ENCODE measurements at regions of chr2 and their contacts with region 1.

Region 1: DNA sequence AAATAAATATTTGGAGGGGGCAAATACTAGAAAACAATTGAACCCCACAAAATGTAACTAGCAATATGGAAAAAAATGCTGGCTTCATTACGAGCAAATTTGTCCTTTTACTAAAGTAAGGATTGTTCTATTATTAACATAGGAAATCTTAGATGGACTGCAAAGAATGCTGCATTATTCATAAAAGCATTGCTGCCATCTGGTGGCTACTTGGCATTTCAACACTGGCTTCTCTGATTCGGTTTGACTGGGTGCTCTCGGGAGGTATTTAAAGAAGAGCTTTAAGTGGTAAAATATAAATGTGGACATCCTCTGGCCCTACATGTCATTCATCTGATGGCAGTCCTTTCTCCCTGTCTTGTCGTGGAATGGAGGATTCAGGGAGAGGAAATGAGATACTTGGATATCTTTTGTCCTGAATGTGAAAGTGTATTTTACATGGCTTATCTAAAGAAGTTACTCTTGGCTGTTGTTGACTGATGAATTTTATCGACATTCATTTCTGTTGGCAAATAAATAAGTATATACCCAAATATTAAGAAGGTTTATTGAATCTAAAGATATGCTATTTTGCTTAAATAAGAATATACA is 130.2 kb downstream of the ARHGAP15 start:
- DNase-seq: peak; percentile 54
- H3K4me3 Mint-ChIP-seq: peak overlapping the region; percentile 63
- H3K27ac Mint-ChIP-seq: peak overlapping the region; percentile 92
- H3K4me1 Mint-ChIP-seq: peaks cover 73% of the 10 kb centered on the region
- H3K27me3 Mint-ChIP-seq: no peaks in the 10 kb centered on the region

Region 2: GRCh38 chr2:143110758-143111428 is 148.6 kb before region 1 on chr2:
- intact Hi-C with region 1: loop called (anchors 1 kb)
- DNase-seq: peak; percentile 46
- H3K4me3 Mint-ChIP-seq: no peak overlapping the region
- H3K27ac Mint-ChIP-seq: peak overlapping the region; percentile 64
- H3K4me1 Mint-ChIP-seq: peaks cover 39% of the 10 kb centered on the region
- H3K27me3 Mint-ChIP-seq: peaks cover 8% of the 10 kb centered on the region

Region 3: DNA sequence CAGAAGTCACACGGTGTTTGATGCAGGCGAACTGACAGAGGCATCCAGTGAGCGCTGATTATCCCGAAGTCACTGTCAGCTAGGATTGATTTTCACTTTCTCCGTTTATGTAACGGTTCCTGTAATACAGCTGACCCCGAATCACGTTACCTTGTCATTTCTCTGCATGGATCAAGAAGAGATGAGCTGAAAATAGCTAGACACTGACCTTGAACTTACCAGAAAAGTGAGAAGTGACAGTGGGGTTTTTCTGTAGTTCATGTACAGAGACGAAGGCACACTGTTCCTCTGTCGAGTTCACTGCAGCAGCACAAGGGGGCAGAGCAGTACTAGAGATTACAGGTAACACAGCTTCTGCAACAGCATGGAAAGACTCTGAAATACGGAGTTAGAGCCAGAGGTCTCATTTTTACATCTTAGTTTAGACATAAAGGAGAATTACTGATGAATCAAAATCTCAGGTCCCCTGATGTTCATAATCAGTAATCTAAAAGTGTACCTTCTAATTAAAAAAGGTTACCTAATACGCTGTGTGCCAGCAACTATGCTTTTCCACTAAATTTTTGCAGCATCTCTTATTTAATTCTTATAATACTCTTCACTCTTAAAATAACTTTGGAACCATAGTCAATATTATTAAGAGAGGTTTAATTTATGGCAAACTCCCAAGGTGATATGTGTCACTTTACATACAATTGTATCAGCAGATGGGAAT is 97.2 kb before region 1 on chr2:
- intact Hi-C with region 1: loop called (anchors 1 kb)
- DNase-seq: peak; percentile 12
- H3K4me3 Mint-ChIP-seq: no peak overlapping the region
- H3K27ac Mint-ChIP-seq: peak overlapping the region; percentile 19
- H3K4me1 Mint-ChIP-seq: peaks cover 54% of the 10 kb centered on the region
- H3K27me3 Mint-ChIP-seq: no peaks in the 10 kb centered on the region

Region 4: GRCh38 chr2:143205106-143205764 is 54.2 kb before region 1 on chr2:
- intact Hi-C with region 1: loop called (anchors 1 kb)
- DNase-seq: no peak
- H3K4me3 Mint-ChIP-seq: no peak overlapping the region
- H3K27ac Mint-ChIP-seq: peak overlapping the region; percentile 47
- H3K4me1 Mint-ChIP-seq: peaks cover 35% of the 10 kb centered on the region
- H3K27me3 Mint-ChIP-seq: no peaks in the 10 kb centered on the region

Region 5: GRCh38 chr2:143223556-143223955 is 35.9 kb before region 1 on chr2:
- intact Hi-C with region 1: loop called (anchors 2 kb)
- DNase-seq: no peak
- H3K4me3 Mint-ChIP-seq: no peak overlapping the region
- H3K27ac Mint-ChIP-seq: no peak overlapping the region
- H3K4me1 Mint-ChIP-seq: peaks cover 41% of the 10 kb centered on the region
- H3K27me3 Mint-ChIP-seq: no peaks in the 10 kb centered on the region

Region 6: DNA sequence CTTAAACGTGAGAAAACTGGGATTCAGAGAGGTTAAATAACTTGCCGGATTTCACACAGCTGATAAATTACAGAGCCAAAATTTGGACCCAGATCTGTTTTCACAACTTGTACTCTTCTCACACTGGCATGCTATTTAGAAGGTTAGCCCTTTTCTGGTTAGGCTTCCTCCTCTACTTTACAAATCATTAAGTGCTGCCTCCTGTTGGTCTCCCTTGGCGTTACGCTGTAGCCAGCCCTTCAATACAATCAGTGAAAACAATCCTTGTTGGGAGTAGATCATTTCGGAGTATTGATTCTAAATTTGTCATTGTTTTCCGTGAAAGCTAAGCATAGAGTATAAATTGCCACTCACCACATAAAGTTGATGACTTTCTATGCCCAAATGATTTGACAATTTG is 23.2 kb after region 1 on chr2:
- intact Hi-C with region 1: loop called (anchors 2 kb)
- DNase-seq: no peak
- H3K4me3 Mint-ChIP-seq: no peak overlapping the region
- H3K27ac Mint-ChIP-seq: no peak overlapping the region
- H3K4me1 Mint-ChIP-seq: peaks cover 20% of the 10 kb centered on the region
- H3K27me3 Mint-ChIP-seq: no peaks in the 10 kb centered on the region

Region 7: GRCh38 chr2:143296089-143296488 is 36.6 kb after region 1 on chr2:
- intact Hi-C with region 1: no loop called
- DNase-seq: no peak
- H3K4me3 Mint-ChIP-seq: no peak overlapping the region
- H3K27ac Mint-ChIP-seq: no peak overlapping the region
- H3K4me1 Mint-ChIP-seq: peaks cover 15% of the 10 kb centered on the region
- H3K27me3 Mint-ChIP-seq: no peaks in the 10 kb centered on the region

Region 8: DNA sequence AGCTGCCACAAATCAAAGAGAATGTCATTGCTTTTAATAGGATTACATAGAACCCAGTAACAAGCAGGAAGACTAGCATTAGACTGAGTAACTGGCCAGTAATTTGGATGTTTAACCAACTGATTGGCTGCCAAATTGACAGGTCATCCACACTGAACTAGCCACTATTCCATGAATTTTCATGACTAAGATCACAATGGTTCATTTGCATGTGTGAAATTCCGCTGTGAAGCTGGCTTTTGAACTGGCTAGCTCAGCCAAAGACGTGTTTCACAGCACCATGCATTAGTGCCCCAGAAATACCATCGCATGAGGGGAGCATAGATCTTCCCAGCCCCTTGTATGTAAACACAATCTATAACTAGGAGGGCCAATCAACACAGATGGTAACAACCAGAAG is 519.6 kb after region 1 on chr2:
- intact Hi-C with region 1: no loop called
- DNase-seq: no peak
- H3K4me3 Mint-ChIP-seq: no peak overlapping the region
- H3K27ac Mint-ChIP-seq: no peak overlapping the region
- H3K4me1 Mint-ChIP-seq: no peaks in the 10 kb centered on the region
- H3K27me3 Mint-ChIP-seq: peaks cover 9% of the 10 kb centered on the region

Measured in activated T-helper 2 cell treated with anti-CD3 and anti-CD28 coated beads, Interferon-gamma antibody, Interleukin-2, Interleukin-4, amounts not matched to agents 10 μg/mL and 5 μg/mL and 100 μg/mL, durations not matched to agents 14 hours and 24 hours and 36 hours (primary cell).